Activated CD8-positive, alpha-beta T cell treated with anti-CD3 and anti-CD28 coated beads for 36 hours (primary cell): ENCODE measurements at regions of chr14 and their contacts with region 1.

Region 1: DNA sequence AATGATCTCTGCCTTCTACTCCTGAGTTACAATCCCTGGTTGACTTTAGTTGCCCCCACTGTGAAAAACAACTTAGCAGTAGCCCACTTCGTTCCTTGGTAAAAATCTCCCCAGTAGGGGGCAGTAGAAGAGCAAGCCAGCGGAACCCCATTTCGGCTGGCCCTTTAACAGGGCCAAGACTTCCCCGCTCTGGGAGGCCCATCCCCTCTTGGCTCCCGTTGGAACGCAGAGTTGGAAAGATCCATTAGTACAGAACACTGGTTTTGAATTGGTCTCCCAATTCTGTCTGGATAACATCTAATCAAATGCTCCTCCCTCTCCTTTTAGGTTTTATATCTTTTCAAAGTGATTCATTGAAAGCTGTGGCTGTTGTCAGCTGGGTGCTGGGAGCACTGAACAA is 1133.3 kb downstream of the BCL11B start:
- DNase-seq: peak; percentile 74
- ATAC-seq: peak; percentile 46
- H3K4me3 Mint-ChIP-seq: peak overlapping the region; percentile 69
- H3K27ac Mint-ChIP-seq: peak overlapping the region; percentile 87
- H3K4me1 Mint-ChIP-seq: peaks cover 82% of the 10 kb centered on the region
- H3K27me3 Mint-ChIP-seq: no peaks in the 10 kb centered on the region
- CTCF ChIP-seq: peak; percentile 93

Region 2: GRCh38 chr14:97978341-97978740 is 160.3 kb before region 1 on chr14:
- CTCF ChIA-PET with region 1: interaction called, 103 read pairs
- POLR2A ChIA-PET with region 1: interaction called, 12 read pairs
- intact Hi-C with region 1: loop called (anchors 5 kb)
- DNase-seq: peak; percentile 90
- ATAC-seq: peak; percentile 84
- H3K4me3 Mint-ChIP-seq: peak overlapping the region; percentile 89
- H3K27ac Mint-ChIP-seq: peak overlapping the region; percentile 95
- H3K4me1 Mint-ChIP-seq: peaks cover 48% of the 10 kb centered on the region
- H3K27me3 Mint-ChIP-seq: no peaks in the 10 kb centered on the region
- CTCF ChIP-seq: peak; percentile 60

Region 3: GRCh38 chr14:98014851-98015615 is 123.6 kb before region 1 on chr14:
- CTCF ChIA-PET with region 1: no interaction called
- POLR2A ChIA-PET with region 1: no interaction called
- intact Hi-C with region 1: no loop called
- DNase-seq: no peak
- ATAC-seq: no peak
- H3K4me3 Mint-ChIP-seq: no peak overlapping the region
- H3K27ac Mint-ChIP-seq: no peak overlapping the region
- H3K4me1 Mint-ChIP-seq: peaks cover 70% of the 10 kb centered on the region
- H3K27me3 Mint-ChIP-seq: no peaks in the 10 kb centered on the region
- CTCF ChIP-seq: no peak

Region 4: DNA sequence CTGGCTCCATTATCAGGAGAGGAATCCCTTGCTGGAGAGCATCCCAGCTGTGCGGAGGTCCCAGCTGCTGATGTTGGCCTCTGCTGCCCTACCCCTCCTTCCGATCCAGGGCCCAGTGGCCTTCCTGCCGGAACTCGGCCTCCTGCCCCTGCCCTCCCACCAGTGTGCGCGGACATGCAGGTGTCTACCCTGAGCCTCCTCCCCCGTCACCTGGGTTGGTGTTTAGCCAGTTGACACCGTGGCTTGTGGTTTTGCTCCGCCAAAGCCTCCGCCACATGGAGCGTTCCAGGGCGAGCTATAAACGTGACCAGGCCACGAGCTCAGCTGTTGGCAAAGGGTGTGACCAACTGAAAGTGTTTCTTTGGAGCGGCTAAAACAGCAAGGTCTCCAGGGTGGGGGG is 29.0 kb after region 1 on chr14:
- CTCF ChIA-PET with region 1: interaction called, 91 read pairs
- POLR2A ChIA-PET with region 1: interaction called, 9 read pairs
- intact Hi-C with region 1: no loop called
- DNase-seq: peak; percentile 58
- ATAC-seq: no peak
- H3K4me3 Mint-ChIP-seq: peak overlapping the region; percentile 56
- H3K27ac Mint-ChIP-seq: peak overlapping the region; percentile 94
- H3K4me1 Mint-ChIP-seq: peaks cover 80% of the 10 kb centered on the region
- H3K27me3 Mint-ChIP-seq: no peaks in the 10 kb centered on the region
- CTCF ChIP-seq: no peak

Region 5: GRCh38 chr14:98173305-98173704 is 34.6 kb after region 1 on chr14:
- CTCF ChIA-PET with region 1: interaction called, 91 read pairs
- POLR2A ChIA-PET with region 1: interaction called, 7 read pairs
- intact Hi-C with region 1: loop called (anchors 5 kb)
- DNase-seq: peak; percentile 71
- ATAC-seq: no peak
- H3K4me3 Mint-ChIP-seq: peak overlapping the region; percentile 57
- H3K27ac Mint-ChIP-seq: peak overlapping the region; percentile 93
- H3K4me1 Mint-ChIP-seq: peaks cover 97% of the 10 kb centered on the region
- H3K27me3 Mint-ChIP-seq: no peaks in the 10 kb centered on the region
- CTCF ChIP-seq: no peak

Region 6: GRCh38 chr14:98189062-98189461 is 50.4 kb after region 1 on chr14:
- CTCF ChIA-PET with region 1: interaction called, 99 read pairs
- POLR2A ChIA-PET with region 1: interaction called, 16 read pairs
- intact Hi-C with region 1: no loop called
- DNase-seq: peak; percentile 64
- ATAC-seq: peak; percentile 57
- H3K4me3 Mint-ChIP-seq: peak overlapping the region; percentile 74
- H3K27ac Mint-ChIP-seq: peak overlapping the region; percentile 99
- H3K4me1 Mint-ChIP-seq: peaks cover 97% of the 10 kb centered on the region
- H3K27me3 Mint-ChIP-seq: no peaks in the 10 kb centered on the region
- CTCF ChIP-seq: no peak

Region 7: GRCh38 chr14:98227000-98227726 is 88.5 kb after region 1 on chr14:
- CTCF ChIA-PET with region 1: interaction called, 17 read pairs
- POLR2A ChIA-PET with region 1: interaction called, 4 read pairs
- intact Hi-C with region 1: no loop called
- DNase-seq: peak; percentile 72
- ATAC-seq: peak; percentile 77
- H3K4me3 Mint-ChIP-seq: peak overlapping the region; percentile 46
- H3K27ac Mint-ChIP-seq: peak overlapping the region; percentile 93
- H3K4me1 Mint-ChIP-seq: peaks cover 78% of the 10 kb centered on the region
- H3K27me3 Mint-ChIP-seq: no peaks in the 10 kb centered on the region
- CTCF ChIP-seq: no peak

Region 8: GRCh38 chr14:98445718-98446117 is 307.1 kb after region 1 on chr14:
- CTCF ChIA-PET with region 1: no interaction called
- POLR2A ChIA-PET with region 1: no interaction called
- intact Hi-C with region 1: no loop called
- DNase-seq: no peak
- ATAC-seq: no peak
- H3K4me3 Mint-ChIP-seq: no peak overlapping the region
- H3K27ac Mint-ChIP-seq: no peak overlapping the region
- H3K4me1 Mint-ChIP-seq: peaks cover 31% of the 10 kb centered on the region
- H3K27me3 Mint-ChIP-seq: no peaks in the 10 kb centered on the region
- CTCF ChIP-seq: no peak